ENCODE measurements at regions of chr2 and their contacts with region 1.

Region 1: DNA sequence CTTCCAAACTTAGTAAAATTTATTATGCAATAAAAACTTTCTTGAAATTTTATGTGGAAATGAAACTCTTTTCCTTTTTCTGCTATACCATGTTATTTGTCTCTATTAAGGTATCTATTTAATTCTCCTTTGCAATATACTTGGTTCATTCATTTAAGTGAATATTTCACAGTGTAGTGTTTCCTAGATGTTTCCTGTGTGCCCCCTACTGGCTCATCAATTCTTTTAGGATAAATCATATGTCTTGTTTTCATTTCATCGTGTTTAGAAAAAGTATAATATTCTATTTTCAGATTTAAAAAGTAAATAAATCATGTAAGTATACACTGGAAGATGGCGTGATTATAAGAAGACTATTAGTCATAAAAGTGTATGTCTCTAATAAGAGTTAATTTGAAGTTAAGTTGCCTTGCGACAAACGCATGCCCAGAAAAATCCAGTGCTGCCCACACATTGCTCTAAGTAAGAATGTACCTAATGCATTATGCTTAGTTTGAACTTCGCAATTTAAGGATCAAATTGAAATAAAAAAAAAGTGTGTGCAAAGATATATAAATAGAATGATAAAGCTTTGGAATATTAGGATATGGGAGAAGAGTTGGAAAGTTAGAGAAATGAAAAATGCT is 525.4 kb downstream of the KCNJ3 start:
- DNase-seq: no peak
- ATAC-seq: no peak
- H3K4me3 ChIP-seq: no peak overlapping the region
- H3K27ac ChIP-seq: no peak overlapping the region
- H3K4me1 ChIP-seq: peaks cover 0 to 2% (median 0%) of the 10 kb centered on the region in 12 donors
- H3K27me3 ChIP-seq: no peaks in the 10 kb centered on the region
- CTCF ChIP-seq: peak; percentile 23 to 61 (median 36)
- POLR2A ChIP-seq: no peak

Region 2: DNA sequence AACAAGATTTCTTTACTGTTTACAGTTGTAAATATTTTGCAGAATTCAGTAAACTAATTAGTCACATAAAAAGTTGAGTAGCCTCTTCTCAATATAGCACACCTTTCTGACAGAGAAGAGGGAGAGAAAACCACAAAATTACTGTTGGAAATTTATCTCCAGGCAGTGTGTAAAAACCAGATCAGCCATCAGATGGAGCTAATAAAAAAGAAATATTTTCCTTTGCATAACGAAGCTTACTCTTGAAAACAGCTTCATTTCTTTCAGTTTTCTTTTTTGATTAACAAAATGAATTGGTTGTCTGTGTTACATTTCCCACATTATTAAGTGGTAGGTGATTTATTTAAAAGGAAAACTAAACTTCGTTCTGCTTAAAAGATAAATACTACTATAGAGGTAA is 784.7 kb before region 1 on chr2:
- intact Hi-C with region 1: loop called in 3 of 10 experiments (anchors 10 kb)
- DNase-seq: no peak
- ATAC-seq: no peak
- H3K4me3 ChIP-seq: no peak overlapping the region
- H3K27ac ChIP-seq: no peak overlapping the region
- H3K4me1 ChIP-seq: no peaks in the 10 kb centered on the region
- H3K27me3 ChIP-seq: no peaks in the 10 kb centered on the region
- CTCF ChIP-seq: peak in 5 of 12 donors; percentile 9 to 36 (median 33)
- POLR2A ChIP-seq: no peak

Region 3: GRCh38 chr2:154447727-154448418 is 776.0 kb before region 1 on chr2:
- intact Hi-C with region 1: loop called in 5 of 10 experiments (anchors 5 to 10 kb)
- DNase-seq: no peak
- ATAC-seq: no peak
- H3K4me3 ChIP-seq: no peak overlapping the region
- H3K27ac ChIP-seq: no peak overlapping the region
- H3K4me1 ChIP-seq: no peaks in the 10 kb centered on the region
- H3K27me3 ChIP-seq: no peaks in the 10 kb centered on the region
- CTCF ChIP-seq: no peak
- POLR2A ChIP-seq: no peak

Region 4: DNA sequence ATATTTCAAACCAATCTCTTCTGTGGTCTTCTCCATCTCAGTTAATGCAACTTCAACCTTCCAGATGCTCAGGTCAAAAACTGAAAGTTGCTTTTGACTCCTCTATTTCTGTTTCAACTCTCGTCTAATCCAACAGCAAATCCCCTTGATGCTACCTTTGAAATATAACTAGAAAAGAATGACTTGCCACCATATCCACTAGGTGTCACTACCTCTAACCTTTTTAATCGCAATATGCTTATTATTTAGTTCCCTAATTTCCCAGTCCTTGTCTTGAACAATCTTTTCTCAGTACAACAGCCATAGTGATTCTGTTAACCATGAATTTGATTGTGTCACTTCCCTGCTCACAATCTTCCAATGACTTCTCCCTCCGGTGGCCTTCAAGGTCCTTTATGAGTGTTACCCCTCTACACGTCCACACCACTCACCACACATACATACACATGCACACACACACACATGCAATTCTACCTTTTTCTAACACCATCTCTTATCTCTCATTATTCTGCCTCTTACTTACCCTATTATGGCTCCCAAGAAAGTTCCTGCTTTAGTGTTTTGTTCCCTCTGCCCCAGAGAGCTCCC is 770.9 kb before region 1 on chr2:
- intact Hi-C with region 1: loop called in 5 of 10 experiments (anchors 5 to 10 kb)
- DNase-seq: no peak
- ATAC-seq: peak in 1 of 4 donors; percentile 28
- H3K4me3 ChIP-seq: no peak overlapping the region
- H3K27ac ChIP-seq: no peak overlapping the region
- H3K4me1 ChIP-seq: peaks cover 0 to 13% (median 0%) of the 10 kb centered on the region in 12 donors
- H3K27me3 ChIP-seq: no peaks in the 10 kb centered on the region
- CTCF ChIP-seq: peak; percentile 18 to 64 (median 50)
- POLR2A ChIP-seq: no peak

Region 5: GRCh38 chr2:154623819-154624218 is 600.1 kb before region 1 on chr2:
- intact Hi-C with region 1: loop called in 7 of 10 experiments (anchors 5 to 10 kb)
- DNase-seq: peak in 2 of 5 donors; percentile 16 to 18
- ATAC-seq: peak in 1 of 4 donors; percentile 52
- H3K4me3 ChIP-seq: no peak overlapping the region
- H3K27ac ChIP-seq: no peak overlapping the region
- H3K4me1 ChIP-seq: no peaks in the 10 kb centered on the region
- H3K27me3 ChIP-seq: no peaks in the 10 kb centered on the region
- CTCF ChIP-seq: peak; percentile 38 to 75 (median 52)
- POLR2A ChIP-seq: no peak

Region 6: DNA sequence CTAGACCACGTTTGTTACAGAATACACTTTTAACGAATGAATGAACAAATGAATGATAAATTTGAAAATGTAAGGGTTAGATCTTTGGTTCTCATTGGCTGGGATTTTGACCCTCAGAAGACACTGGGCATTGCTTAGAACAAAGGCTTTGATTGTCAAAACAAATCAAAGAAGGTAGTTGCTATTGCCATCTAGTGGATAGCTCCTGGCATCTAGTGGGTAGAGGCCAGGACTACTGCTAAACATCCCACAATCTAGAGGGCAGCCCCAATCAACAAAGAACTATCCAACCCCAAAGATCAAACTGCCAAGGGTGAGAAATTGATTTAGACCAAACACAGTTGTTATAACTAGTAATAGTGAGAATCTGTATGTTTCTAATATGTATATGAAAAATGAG is 26.9 kb after region 1 on chr2:
- intact Hi-C with region 1: no loop called
- DNase-seq: no peak
- ATAC-seq: no peak
- H3K4me3 ChIP-seq: no peak overlapping the region
- H3K27ac ChIP-seq: no peak overlapping the region
- H3K4me1 ChIP-seq: no peaks in the 10 kb centered on the region
- H3K27me3 ChIP-seq: no peaks in the 10 kb centered on the region
- CTCF ChIP-seq: peak in 4 of 12 donors; percentile 5 to 36 (median 18)
- POLR2A ChIP-seq: no peak

Region 7: GRCh38 chr2:155310589-155310988 is 86.7 kb after region 1 on chr2:
- intact Hi-C with region 1: no loop called
- DNase-seq: no peak
- ATAC-seq: no peak
- H3K4me3 ChIP-seq: no peak overlapping the region
- H3K27ac ChIP-seq: no peak overlapping the region
- H3K4me1 ChIP-seq: no peaks in the 10 kb centered on the region
- H3K27me3 ChIP-seq: no peaks in the 10 kb centered on the region
- CTCF ChIP-seq: peak in 11 of 12 donors; percentile 17 to 58 (median 37)
- POLR2A ChIP-seq: no peak